CD14-positive monocyte (primary cell): ENCODE measurements at regions of chr3 and their contacts with region 1.

Region 1: GRCh38 chr3:195909644-195910508 is 1.5 kb upstream of the TNK2 start:
- DNase-seq: peak; percentile 72 to 79 (median 73)
- H3K4me3 ChIP-seq: peak overlapping the region; percentile 12 to 72 (median 29)
- H3K4me3 Mint-ChIP-seq: peak overlapping the region; percentile 75 to 76
- H3K27ac ChIP-seq: peak overlapping the region; percentile 1 to 47
- H3K27ac Mint-ChIP-seq: peak overlapping the region in 3 of 7 donors; percentile 40 to 78 (median 74)
- H3K4me1 ChIP-seq: peaks cover 45 to 48% of the 10 kb centered on the region in 2 donors
- H3K4me1 Mint-ChIP-seq: peaks cover 43% of the 10 kb centered on the region
- H3K27me3 ChIP-seq: no peaks in the 10 kb centered on the region
- H3K27me3 Mint-ChIP-seq: peaks cover 0 to 1% (median 1%) of the 10 kb centered on the region in 3 donors
- CTCF ChIP-seq: no peak

Region 2: DNA sequence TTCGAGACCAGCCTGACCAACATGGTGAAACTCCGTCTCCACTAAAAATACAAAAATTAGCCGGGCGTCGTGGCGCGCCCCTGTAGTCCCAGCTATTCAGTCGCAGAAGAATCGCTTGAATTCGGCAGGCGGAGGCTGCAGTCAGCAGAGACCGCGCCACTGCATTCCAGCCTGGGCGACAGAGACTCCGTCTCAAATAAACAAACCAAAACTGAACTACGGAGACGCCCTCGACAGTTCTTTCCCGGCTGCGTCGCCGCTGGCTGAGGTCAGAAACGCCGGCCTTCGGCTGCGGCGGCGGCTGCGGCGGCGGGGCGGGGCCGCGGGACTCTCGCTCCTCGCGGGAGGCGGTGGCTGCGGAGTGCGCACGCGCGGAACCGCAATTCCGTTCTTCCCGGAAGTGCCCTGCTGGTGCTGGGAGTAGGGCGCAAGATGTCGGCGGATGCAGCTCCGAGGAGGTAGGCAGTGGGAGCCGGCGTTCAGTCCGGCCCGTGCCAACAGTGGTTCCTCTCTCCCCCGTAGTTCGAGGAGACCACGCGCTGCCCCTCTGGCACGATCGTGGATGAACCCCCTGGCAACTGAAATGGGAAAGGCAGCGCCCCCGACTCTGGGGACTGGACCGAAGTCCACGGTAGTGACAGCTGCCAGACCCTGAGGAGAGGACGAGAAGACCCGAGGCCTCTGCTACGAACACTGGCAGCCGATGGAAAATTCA is 1326.1 kb before region 1 on chr3:
- intact Hi-C with region 1: loop called in 1 of 2 experiments (anchors 10 kb)
- DNase-seq: peak; percentile 91 to 92 (median 92)
- H3K4me3 ChIP-seq: peak overlapping the region; percentile 75 to 96 (median 94)
- H3K4me3 Mint-ChIP-seq: peak overlapping the region; percentile 86 to 94
- H3K27ac ChIP-seq: peak overlapping the region; percentile 85 to 97
- H3K27ac Mint-ChIP-seq: peak overlapping the region; percentile 97 to 100 (median 99)
- H3K4me1 ChIP-seq: peaks cover 32 to 43% of the 10 kb centered on the region in 2 donors
- H3K4me1 Mint-ChIP-seq: peaks cover 37% of the 10 kb centered on the region
- H3K27me3 ChIP-seq: no peaks in the 10 kb centered on the region
- H3K27me3 Mint-ChIP-seq: no peaks in the 10 kb centered on the region
- CTCF ChIP-seq: no peak

Region 3: DNA sequence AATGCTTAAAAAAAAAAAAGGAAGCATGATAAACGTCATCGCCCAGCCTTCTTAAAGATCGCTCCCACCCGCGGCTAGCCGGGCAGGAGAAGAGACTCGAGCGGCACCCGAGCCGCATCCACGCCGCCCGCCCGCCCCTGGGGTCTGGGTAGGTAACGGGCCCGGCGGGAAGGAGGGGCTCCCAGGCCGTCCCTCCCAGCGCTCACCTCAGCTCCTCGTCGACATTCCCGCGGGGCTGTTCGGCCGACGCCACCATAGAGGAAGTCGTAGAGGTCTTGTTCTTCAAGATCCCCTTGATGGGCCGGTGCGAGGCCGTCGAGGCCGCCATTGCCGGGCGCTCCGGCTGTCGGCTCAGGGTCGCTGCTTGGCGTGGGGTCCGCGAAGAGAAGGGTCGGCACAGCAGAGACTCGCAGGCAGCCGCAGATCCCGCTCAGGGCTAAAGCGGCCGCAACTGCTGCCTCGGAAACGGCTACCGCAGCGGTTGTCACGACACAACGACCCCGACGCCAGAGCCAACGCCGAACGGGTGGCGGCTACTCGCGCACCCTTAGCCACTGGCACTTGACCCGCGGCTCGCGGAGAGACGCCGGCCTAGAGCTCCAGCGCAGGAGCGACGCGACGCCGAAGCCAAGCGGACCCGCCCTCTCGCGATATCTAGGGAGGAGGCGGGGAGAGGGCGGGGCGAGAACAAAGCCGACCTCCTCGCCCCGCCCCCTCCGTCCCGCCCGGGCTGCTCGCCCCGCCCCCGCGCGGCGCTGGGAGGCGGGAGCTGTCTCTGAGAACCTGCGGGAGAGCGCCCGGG is 367.0 kb before region 1 on chr3 and contains the start of gene PPP1R2:
- intact Hi-C with region 1: loop called in 1 of 2 experiments (anchors 10 kb)
- DNase-seq: peak; percentile 87 to 89 (median 88)
- H3K4me3 ChIP-seq: peak within 1 kb of the TSS; percentile 73 to 91 (median 89)
- H3K4me3 Mint-ChIP-seq: peak within 1 kb of the TSS; percentile 89 to 94
- H3K27ac ChIP-seq: peak within 1 kb of the TSS; percentile 84 to 92
- H3K27ac Mint-ChIP-seq: peak within 1 kb of the TSS; percentile 93 to 98 (median 96)
- H3K4me1 ChIP-seq: peaks cover 30 to 42% of the 10 kb centered on the region in 2 donors
- H3K4me1 Mint-ChIP-seq: peaks cover 57% of the 10 kb centered on the region
- H3K27me3 ChIP-seq: peaks cover 8 to 16% of the 10 kb centered on the region in 2 donors
- H3K27me3 Mint-ChIP-seq: peaks cover 17 to 25% (median 24%) of the 10 kb centered on the region in 3 donors
- CTCF ChIP-seq: no peak
- polyA plus RNA-seq, gene PPP1R2: 21.0 to 121 (median 118) TPM

Region 4: DNA sequence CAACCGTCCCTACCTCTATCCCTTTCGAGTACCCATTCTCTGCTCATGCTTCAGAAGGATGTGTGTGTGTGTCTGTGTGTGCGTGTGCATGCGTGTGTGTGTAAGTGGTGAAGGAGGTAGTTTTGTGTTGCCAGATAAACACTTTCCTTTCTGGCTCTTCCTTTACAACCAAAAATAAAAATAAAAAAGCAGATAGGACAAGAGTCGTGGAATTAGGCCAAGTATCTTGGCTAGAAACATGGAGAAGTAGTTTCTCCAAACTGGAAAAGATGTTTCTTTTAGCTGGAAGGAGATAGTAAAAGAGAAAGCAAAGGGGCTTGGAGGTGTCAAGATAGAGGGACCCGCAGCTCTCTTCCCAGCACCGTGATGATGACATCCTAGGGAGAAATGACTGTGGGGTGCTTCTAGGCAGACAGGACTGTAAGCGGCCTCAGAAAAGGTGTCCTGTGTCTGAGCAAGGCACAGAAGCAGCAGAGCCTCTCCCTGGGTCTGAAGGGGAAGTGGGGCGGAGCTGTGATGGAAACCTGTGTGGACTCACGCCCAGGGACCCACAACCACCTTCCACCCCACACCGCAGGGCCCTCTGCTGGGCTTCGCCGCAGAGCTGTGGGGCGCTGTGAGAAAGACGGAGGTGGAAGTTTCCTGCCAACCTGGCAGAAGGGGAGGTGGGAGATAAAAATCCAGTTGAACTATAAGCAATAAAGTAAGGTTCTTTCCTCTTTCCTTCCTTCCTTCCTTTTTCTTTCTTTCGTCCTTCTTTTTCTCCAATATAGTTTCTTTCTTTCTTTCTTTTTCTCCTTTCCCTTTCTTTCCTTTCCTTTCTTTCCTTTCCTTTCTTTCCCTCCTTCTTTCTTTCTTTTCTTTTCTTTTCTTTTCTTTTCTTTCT is 153.8 kb before region 1 on chr3:
- intact Hi-C with region 1: no loop called
- DNase-seq: no peak
- H3K4me3 ChIP-seq: no peak overlapping the region
- H3K4me3 Mint-ChIP-seq: no peak overlapping the region
- H3K27ac ChIP-seq: no peak overlapping the region
- H3K27ac Mint-ChIP-seq: no peak overlapping the region
- H3K4me1 ChIP-seq: no peaks in the 10 kb centered on the region
- H3K4me1 Mint-ChIP-seq: no peaks in the 10 kb centered on the region
- H3K27me3 ChIP-seq: peaks cover 3 to 19% of the 10 kb centered on the region in 2 donors
- H3K27me3 Mint-ChIP-seq: peaks cover 27 to 46% (median 35%) of the 10 kb centered on the region in 3 donors
- CTCF ChIP-seq: no peak

Region 5: DNA sequence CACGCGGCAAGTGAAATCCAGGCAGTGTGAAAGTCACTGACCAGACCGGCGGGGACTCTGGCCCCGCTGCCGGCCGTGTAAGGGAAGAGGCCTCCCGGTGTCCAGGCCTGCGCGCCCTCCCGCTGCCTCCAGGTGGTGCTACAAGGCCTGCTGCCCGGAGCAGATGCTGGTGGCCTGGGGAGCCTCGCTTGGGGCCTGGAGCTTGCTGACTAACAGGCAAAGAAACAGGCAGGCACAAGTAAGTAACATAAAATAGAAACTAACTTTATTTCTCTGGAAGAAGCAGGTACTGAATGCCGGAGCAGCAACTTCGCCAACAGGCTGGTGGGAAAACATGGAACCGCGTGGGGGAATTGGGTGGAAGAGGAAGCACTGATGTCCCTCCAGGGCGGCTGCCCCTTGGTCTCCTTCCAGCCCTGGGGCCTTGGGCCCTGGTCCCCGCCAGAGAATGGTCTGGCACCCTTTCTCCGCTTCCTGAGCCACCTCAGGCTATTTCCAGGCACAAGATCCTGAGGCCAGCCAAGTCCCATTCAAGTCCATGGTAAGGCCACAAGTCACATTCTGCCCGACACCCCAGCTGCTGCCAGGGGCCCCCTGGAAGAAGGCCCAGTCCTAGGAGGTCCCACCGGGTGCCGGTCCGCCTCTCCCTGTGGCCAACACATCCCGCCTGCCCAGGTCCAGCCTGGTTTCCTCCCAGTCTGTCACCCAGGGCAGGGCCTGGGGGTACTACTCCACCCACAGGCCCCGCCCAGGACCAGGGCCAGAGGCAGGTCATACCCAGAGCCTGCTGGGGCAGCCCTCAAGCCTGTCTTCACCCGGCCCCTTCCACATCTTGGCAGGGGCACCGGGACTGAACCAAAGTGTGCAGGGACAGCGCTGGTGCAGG is 46.5 kb before region 1 on chr3:
- intact Hi-C with region 1: loop called in 1 of 2 experiments (anchors 1 kb)
- DNase-seq: peak; percentile 64 to 73 (median 64)
- H3K4me3 ChIP-seq: no peak overlapping the region
- H3K4me3 Mint-ChIP-seq: no peak overlapping the region
- H3K27ac ChIP-seq: peak overlapping the region in 1 of 2 donors; percentile 16
- H3K27ac Mint-ChIP-seq: peak overlapping the region in 2 of 7 donors; percentile 64 to 69
- H3K4me1 ChIP-seq: peaks cover 4% of the 10 kb centered on the region in 2 donors
- H3K4me1 Mint-ChIP-seq: peaks cover 16% of the 10 kb centered on the region
- H3K27me3 ChIP-seq: no peaks in the 10 kb centered on the region
- H3K27me3 Mint-ChIP-seq: peaks cover 2 to 14% (median 10%) of the 10 kb centered on the region in 3 donors
- CTCF ChIP-seq: peak; percentile 85

Region 6: DNA sequence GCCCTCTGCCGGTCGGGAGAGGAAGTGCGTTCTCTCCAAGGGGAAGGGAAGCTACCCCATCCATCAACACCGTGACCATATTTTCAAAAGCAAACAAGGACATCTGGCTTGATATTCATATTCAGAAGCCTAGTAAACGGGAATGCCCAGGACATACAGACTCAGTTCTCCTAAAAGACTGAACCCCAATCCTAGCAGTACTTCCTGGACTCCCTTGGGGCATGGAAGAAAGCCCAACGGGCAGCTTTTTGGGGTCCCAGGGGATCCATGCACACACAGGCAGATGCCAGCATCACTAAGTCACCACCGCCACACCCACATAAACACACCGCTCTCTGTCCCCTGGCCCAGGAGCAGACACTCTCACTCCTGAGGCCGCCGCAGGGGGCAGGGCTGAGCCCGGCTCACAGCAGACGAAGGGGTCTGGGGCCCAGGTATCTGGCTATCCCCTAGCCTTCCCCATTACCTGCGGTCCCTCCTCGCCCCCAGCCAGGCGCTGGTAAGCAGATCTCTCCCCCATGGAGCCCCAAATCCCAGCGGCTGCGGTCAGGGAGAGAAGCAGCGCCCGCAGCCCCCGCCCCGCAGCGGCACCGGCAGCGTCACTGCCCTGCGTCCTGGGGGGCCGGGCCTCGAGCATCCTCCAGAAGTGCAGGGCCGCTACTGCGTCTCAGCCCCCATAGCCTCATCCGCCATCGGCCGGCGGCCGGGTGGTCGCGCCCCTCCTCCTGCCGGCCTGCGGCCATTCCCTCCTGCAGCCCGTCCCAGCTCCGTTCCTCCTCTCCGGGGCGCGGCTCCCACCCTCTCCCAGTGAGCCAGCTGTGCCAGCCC is 14.9 kb before region 1 on chr3:
- intact Hi-C with region 1: loop called (anchors 1 to 2 kb)
- DNase-seq: peak; percentile 70 to 80 (median 77)
- H3K4me3 ChIP-seq: peak overlapping the region; percentile 47 to 84 (median 55)
- H3K4me3 Mint-ChIP-seq: peak overlapping the region; percentile 87 to 90
- H3K27ac ChIP-seq: peak overlapping the region; percentile 93 to 98
- H3K27ac Mint-ChIP-seq: peak overlapping the region; percentile 90 to 99 (median 93)
- H3K4me1 ChIP-seq: peaks cover 59 to 67% of the 10 kb centered on the region in 2 donors
- H3K4me1 Mint-ChIP-seq: peaks cover 54% of the 10 kb centered on the region
- H3K27me3 ChIP-seq: no peaks in the 10 kb centered on the region
- H3K27me3 Mint-ChIP-seq: no peaks in the 10 kb centered on the region
- CTCF ChIP-seq: peak; percentile 93

Region 7: DNA sequence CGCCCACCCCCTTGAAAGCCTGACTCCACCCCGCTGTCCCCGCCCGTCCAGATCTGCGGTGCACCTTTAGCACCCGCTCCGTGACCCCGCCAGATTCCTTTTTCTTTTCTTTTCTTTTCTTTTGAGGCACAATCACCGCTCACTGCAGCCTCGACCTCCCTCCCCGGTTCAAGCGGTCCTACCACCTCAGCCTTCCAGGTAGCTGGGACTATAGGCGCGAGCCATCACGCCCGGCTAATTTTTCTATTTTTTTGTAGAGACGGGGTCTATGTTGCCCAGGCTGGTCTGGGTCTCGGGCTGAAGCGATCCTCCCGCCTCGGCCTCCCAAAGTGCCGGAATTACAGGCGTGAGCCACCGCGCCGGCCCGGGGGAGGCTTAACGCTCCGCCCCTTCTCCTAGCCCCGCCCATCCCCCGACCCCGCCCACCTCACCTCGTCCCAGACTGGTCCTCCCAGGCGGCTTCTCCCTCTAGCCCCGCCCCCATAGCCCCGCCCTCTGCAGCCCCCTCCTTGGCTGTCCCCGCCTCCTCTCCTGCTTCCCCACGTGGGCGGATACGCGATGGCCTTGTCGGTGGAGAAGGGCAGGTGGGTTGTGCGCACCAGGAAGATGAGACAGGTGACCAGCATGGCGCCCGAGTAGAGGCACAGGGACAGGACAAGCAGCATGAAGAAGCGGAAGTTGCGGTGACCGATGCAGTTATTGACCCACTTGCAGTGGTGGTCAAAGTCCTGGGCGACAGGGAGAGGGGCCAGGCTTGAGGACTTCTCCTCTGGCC is 298.1 kb after region 1 on chr3:
- intact Hi-C with region 1: loop called in 1 of 2 experiments (anchors 10 kb)
- DNase-seq: peak; percentile 15 to 61 (median 39)
- H3K4me3 ChIP-seq: peak overlapping the region; percentile 38 to 75 (median 52)
- H3K4me3 Mint-ChIP-seq: peak overlapping the region; percentile 82 to 88
- H3K27ac ChIP-seq: no peak overlapping the region
- H3K27ac Mint-ChIP-seq: peak overlapping the region in 6 of 7 donors; percentile 3 to 81 (median 76)
- H3K4me1 ChIP-seq: peaks cover 24 to 36% of the 10 kb centered on the region in 2 donors
- H3K4me1 Mint-ChIP-seq: peaks cover 47% of the 10 kb centered on the region
- H3K27me3 ChIP-seq: no peaks in the 10 kb centered on the region
- H3K27me3 Mint-ChIP-seq: peaks cover 4 to 14% (median 13%) of the 10 kb centered on the region in 3 donors
- CTCF ChIP-seq: no peak

Region 8: GRCh38 chr3:196632046-196632751 is 722.3 kb after region 1 on chr3:
- intact Hi-C with region 1: loop called in 1 of 2 experiments (anchors 10 kb)
- DNase-seq: peak; percentile 76 to 83 (median 80)
- H3K4me3 ChIP-seq: peak overlapping the region; percentile 45 to 82 (median 57)
- H3K4me3 Mint-ChIP-seq: peak overlapping the region; percentile 89 to 99
- H3K27ac ChIP-seq: peak overlapping the region; percentile 90 to 98
- H3K27ac Mint-ChIP-seq: peak overlapping the region; percentile 96 to 98 (median 98)
- H3K4me1 ChIP-seq: peaks cover 81 to 96% of the 10 kb centered on the region in 2 donors
- H3K4me1 Mint-ChIP-seq: peaks cover 73% of the 10 kb centered on the region
- H3K27me3 ChIP-seq: no peaks in the 10 kb centered on the region
- H3K27me3 Mint-ChIP-seq: peaks cover 0 to 3% (median 0%) of the 10 kb centered on the region in 3 donors
- CTCF ChIP-seq: peak; percentile 28